Left colon (tissue), 2 donors: ENCODE measurements at regions of chr7 and their contacts with region 1.

Region 1: DNA sequence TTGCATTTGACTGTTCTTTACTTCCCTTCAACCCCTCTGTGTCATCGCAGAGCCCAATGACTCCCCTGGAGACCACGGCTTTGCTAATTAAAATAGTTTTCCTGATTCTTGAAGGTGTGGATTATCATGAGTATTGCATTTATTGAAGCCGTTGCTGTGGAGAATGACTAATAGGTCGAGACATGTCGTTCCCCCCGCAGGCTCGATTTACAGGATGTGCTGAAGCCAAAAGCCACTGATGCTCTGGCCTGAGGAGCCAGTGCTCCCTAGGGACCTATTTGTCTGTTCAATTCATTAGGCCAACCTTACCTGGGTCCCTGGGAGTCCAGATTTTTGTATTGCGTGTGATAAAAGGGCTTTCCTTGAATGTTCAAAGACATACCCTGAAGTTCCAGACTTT is 102.3 kb downstream of the NPTX2 start:
- DNase-seq: no peak
- ATAC-seq: no peak

Region 2: DNA sequence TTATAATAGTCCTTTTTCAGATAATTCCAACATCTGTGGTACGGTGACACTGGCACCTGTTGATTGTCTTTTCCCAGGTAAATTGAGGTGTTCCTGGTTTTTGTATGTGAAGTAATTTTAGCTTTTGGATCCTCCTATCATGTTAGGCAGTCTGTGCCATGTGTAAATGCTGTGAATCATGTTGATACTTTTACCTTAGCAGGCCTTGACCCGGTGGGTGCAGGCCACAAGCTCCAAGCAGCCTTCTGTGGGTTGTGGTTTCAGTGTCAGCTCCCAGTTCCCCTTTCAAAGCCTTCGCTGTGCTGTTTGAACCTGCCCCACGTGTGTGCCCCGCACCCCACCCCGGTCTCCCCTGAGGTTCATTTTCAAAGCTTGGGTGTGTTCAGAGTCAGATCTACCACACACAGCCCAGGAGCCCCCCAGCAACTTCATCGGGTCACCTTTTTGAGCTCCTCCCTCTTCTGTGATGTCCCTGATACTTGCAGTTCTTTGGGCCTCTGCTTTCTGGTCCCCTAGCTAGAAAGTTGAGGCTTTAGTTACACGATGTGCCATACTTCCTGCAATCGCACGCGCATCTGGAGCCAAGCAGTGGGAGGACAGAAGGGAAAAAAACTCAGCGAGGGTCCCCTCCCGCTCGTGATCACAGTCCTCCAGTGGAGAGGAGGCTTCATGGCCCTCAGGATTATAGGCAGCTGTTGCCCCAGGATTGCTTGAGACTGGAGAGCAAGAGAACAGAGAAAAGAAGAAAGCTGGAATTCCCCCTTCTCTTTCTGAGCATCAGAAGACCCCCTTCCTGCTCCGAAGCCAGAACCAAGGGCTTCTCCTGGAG is 516.8 kb before region 1 on chr7:
- intact Hi-C with region 1: no loop called
- DNase-seq: peak; percentile 48 to 59
- ATAC-seq: peak; percentile 36

Region 3: GRCh38 chr7:98785929-98786571 is 66.7 kb after region 1 on chr7:
- intact Hi-C with region 1: no loop called
- DNase-seq: no peak
- ATAC-seq: no peak

Region 4: DNA sequence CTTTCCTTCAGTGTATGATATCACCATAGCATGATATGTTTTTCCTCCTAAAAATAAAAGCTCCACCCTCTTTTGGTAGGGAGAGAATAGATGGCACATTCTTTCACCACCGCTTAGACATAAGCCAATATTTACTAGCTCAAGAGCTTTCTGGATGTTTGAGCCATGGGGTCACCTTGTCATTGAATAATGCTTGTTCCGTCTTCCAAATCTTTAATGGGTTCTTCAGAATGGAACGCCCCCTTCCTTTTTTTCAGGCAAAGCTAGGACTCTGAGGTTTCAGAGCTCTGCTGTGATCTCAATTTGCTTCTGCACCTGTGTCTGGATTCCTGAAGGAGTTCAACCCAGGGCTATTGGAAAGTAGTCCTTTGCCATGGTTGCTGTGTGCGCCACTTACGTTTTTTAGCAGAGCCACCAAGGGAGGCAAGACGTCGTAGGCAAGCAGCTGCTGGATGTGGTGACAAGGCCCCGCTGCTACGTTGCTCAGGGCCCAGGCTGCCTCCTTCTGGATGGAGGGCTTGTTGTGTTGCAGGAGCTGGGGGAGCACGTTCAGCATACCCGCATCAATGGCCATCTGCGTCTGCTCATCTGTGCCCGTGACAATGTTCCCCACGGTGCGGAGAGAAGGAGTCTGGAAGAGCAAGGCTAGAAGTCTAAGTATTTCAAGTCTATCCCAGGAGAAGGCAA is 465.3 kb after region 1 on chr7:
- intact Hi-C with region 1: loop called in 1 of 2 experiments (anchors 10 kb)
- DNase-seq: no peak
- ATAC-seq: no peak